Prostate gland (tissue), 2 donors: ENCODE measurements at regions of chr16 and their contacts with region 1.

Region 1: DNA sequence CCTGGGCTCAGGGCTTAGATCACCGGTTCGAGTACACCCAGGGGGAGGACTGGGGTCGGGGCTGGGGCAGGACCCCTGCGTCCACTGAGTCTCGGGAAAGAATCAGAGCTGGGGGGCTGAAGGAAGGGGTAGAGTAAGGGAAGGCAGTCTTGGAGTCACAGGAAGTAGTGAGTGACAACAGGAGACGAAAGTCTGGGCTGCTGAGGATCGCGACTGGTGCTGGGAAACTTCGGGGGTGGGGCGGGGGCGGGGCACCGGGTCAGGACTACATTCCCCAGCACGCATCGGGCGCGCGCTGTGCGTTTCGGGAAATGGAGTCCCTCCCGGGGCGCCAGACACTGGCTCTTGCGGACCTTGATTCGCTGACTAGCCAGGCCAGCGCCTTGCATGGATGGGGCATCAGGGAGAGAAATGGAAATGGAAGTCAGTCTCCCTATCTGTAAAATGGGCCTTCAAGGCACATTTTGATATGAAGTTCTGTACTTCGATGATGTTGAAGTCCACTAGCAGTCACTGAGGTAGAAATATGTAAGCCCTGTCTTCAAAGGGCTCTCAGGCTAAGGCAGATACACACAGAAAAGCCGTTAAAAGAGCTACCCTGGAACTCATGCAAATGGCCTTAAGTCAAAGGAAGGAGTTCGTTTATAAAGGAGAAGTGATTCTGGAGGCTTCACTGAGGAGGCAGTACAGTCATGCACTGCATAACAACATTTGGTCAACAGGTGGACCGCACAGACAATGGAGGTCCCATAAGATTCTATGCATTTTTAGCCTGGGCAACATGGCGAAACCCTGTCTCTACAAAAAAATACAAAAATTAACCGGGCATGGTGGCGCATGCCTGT is 697 bp downstream of the CTF1 start:
- DNase-seq: peak; percentile 89
- H3K4me3 ChIP-seq: peak overlapping the region; percentile 47 to 48
- H3K27ac ChIP-seq: peak overlapping the region; percentile 99 to 100
- H3K4me1 ChIP-seq: peaks cover 15% of the 10 kb centered on the region
- H3K27me3 ChIP-seq: no peaks in the 10 kb centered on the region
- CTCF ChIP-seq: peak in 1 of 4 experiments; percentile 4
- POLR2A ChIP-seq: peak; percentile 19

Region 2: DNA sequence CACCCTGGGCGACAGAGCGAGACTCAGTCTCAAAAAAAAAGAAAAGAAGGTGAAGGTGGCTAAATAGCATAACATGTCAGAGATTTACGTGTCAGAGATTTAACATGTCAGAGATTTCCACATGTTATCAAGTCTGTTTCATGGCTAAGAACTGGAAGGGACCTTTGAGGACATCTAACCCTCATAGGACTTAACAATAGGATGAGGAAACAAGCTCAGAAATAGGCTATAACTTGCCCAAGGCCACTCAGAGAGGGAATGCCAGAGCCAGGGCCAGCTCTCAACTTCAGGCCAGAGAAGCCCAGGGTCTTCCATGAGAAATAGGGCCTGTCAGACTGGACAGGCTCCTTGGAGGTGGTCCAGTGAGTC is 83.3 kb before region 1 on chr16:
- intact Hi-C with region 1: no loop called
- DNase-seq: no peak
- H3K4me3 ChIP-seq: peak overlapping the region; percentile 26 to 44
- H3K27ac ChIP-seq: peak overlapping the region; percentile 73 to 75
- H3K4me1 ChIP-seq: no peaks in the 10 kb centered on the region
- H3K27me3 ChIP-seq: no peaks in the 10 kb centered on the region
- CTCF ChIP-seq: no peak
- POLR2A ChIP-seq: no peak

Region 3: GRCh38 chr16:30874821-30875717 is 22.0 kb before region 1 on chr16:
- intact Hi-C with region 1: loop called (anchors 2 kb)
- DNase-seq: peak; percentile 87
- H3K4me3 ChIP-seq: peak overlapping the region; percentile 74 to 75
- H3K27ac ChIP-seq: peak overlapping the region; percentile 83 to 89
- H3K4me1 ChIP-seq: peaks cover 9% of the 10 kb centered on the region
- H3K27me3 ChIP-seq: no peaks in the 10 kb centered on the region
- CTCF ChIP-seq: no peak
- POLR2A ChIP-seq: peak; percentile 84